Aorta (tissue), 5 donors: ENCODE measurements at regions of chrX and their contacts with region 1.

Region 1: DNA sequence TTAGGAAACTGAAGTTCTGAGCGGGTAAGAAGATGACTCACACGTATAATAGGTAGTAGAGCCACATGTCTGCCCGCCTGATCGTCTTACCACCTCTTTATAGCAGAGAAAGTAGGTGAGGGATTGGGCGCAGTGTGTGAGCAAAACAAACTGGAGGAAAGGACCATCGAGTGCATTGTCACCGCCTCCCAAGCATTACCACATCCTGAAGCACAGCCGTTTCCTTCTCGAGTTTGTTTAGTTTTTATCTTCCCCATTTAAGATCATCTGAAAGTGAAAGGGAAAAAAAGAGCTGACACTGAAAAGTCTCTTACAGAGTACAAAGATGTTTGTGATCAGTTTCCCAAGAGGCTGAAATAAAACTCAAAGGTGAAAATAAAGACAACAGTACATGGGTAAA is 14.8 kb downstream of the PDK3 start:
- DNase-seq: no peak
- ATAC-seq: no peak
- H3K4me3 ChIP-seq: no peak overlapping the region
- H3K27ac ChIP-seq: no peak overlapping the region
- H3K4me1 ChIP-seq: peaks cover 0 to 6% of the 10 kb centered on the region in 2 donors
- H3K27me3 ChIP-seq: no peaks in the 10 kb centered on the region

Region 2: GRCh38 chrX:23797371-23798128 is 682.4 kb before region 1 on chrX:
- intact Hi-C with region 1: loop called in 1 of 2 experiments (anchors 10 kb)
- DNase-seq: no peak
- ATAC-seq: no peak
- H3K4me3 ChIP-seq: no peak overlapping the region
- H3K27ac ChIP-seq: no peak overlapping the region
- H3K4me1 ChIP-seq: no peaks in the 10 kb centered on the region
- H3K27me3 ChIP-seq: no peaks in the 10 kb centered on the region